ENCODE measurements at regions of chr1 and their contacts with region 1.

Region 1: DNA sequence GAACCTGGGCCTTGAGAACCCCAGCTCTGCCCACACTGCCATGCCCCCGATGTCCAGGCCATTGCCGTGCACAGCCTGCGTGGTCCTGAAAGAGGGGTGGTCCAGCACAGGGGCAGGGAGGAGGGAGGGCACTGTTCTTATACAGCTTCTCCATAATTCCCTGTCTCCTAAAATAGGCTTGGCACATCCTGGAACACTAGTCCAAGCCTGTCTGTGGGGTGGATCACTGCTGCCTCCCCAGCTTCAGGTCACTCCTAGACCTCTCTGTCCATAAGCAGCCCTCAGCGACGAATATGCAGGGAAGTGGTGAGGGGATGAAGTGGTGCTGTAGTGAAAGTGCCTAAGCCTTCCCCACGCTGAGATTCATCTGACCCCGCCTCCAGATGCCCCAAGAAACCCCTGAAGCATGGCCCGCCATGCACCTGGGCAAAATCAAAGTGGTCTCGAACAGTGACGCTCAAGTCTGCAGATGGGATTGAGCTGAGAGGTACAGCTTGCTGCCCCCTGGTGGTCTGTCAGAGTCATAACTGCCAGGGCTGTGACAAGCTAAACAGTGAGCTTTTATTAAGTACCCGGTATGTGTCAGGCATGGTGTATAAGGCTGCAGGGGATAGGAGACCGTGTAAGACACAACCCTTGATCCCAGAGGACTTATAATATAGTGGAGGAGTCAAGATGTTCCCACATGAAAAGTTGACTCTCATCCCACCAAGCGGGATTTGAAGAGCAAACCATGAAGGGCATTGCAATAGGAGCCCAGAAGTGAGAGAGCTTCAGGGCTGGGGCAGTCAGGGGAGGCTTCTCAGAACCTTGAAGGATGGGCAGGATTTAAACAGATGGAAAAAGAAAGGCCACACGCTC is 66.6 kb downstream of the FAM163A start:
- DNase-seq: peak; percentile 53 to 82 (median 78)
- ATAC-seq: peak; percentile 87
- H3K4me3 ChIP-seq: no peak overlapping the region
- H3K4me3 Mint-ChIP-seq: peak overlapping the region in 5 of 10 donors; percentile 20 to 46 (median 32)
- H3K27ac ChIP-seq: no peak overlapping the region
- H3K27ac Mint-ChIP-seq: peak overlapping the region in 6 of 9 donors; percentile 2 to 82 (median 26)
- H3K4me1 ChIP-seq: peaks cover 6 to 13% of the 10 kb centered on the region in 2 donors
- H3K4me1 Mint-ChIP-seq: peaks cover 1 to 13% (median 12%) of the 10 kb centered on the region in 7 donors
- H3K27me3 ChIP-seq: no peaks in the 10 kb centered on the region
- H3K27me3 Mint-ChIP-seq: peaks cover 0 to 6% (median 0%) of the 10 kb centered on the region in 5 donors

Region 2: DNA sequence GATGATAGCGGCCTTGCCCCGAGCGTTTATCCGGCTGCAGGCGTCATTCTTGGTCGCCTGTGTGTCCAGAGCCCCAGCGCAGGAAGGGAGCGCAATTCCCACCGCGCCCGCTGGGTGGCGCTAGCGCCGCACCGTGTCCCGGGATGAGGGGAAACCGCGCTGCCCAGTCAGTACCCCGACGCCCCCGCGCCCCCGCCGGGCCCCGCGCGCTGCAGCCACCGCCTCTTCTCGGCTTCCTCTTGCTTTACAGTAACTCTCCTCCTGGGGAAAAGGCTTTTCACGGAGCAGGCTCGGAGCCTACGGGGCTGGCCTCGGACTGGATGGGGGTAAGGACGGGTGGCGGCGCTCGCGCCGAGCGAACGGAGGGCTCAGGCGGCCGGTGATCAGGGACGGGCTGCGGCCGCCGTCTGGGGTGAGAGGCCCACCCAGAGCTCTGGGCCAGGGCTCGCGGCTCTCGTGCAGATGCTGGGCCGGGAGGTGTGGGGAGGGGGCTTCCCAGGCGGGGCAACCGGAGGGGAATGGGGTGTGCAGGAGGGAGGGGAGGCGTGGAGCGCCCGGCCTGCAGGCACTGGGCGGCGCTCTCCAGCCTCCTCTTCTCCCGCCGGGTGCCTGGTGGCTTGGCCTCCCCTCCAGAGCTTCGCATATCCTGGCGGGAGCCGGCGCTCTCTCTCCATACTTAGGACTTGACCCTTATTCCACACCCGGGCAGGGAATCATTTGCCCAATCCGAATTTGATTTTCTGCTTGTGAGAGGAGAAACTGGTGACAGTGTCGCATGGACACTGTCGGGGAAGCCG is 1267.0 kb before region 1 on chr1:
- CTCF ChIA-PET with region 1: no interaction called
- POLR2A ChIA-PET with region 1: no interaction called
- intact Hi-C with region 1: loop called in 1 of 2 experiments (anchors 10 kb)
- DNase-seq: peak; percentile 61 to 98 (median 87)
- ATAC-seq: peak; percentile 96
- H3K4me3 ChIP-seq: peak overlapping the region; percentile 99
- H3K4me3 Mint-ChIP-seq: peak overlapping the region; percentile 89 to 96 (median 92)
- H3K27ac ChIP-seq: peak overlapping the region; percentile 56
- H3K27ac Mint-ChIP-seq: peak overlapping the region; percentile 32 to 88 (median 83)
- H3K4me1 ChIP-seq: peaks cover 0 to 5% of the 10 kb centered on the region in 2 donors
- H3K4me1 Mint-ChIP-seq: peaks cover 0 to 15% (median 10%) of the 10 kb centered on the region in 7 donors
- H3K27me3 ChIP-seq: no peaks in the 10 kb centered on the region
- H3K27me3 Mint-ChIP-seq: no peaks in the 10 kb centered on the region

Region 3: GRCh38 chr1:179393721-179394120 is 416.0 kb before region 1 on chr1:
- CTCF ChIA-PET with region 1: no interaction called
- POLR2A ChIA-PET with region 1: no interaction called
- intact Hi-C with region 1: no loop called
- DNase-seq: no peak
- ATAC-seq: no peak
- H3K4me3 ChIP-seq: no peak overlapping the region
- H3K4me3 Mint-ChIP-seq: no peak overlapping the region
- H3K27ac ChIP-seq: no peak overlapping the region
- H3K27ac Mint-ChIP-seq: no peak overlapping the region
- H3K4me1 ChIP-seq: no peaks in the 10 kb centered on the region
- H3K4me1 Mint-ChIP-seq: no peaks in the 10 kb centered on the region
- H3K27me3 ChIP-seq: no peaks in the 10 kb centered on the region
- H3K27me3 Mint-ChIP-seq: peaks cover 0 to 20% (median 13%) of the 10 kb centered on the region in 5 donors

Region 4: DNA sequence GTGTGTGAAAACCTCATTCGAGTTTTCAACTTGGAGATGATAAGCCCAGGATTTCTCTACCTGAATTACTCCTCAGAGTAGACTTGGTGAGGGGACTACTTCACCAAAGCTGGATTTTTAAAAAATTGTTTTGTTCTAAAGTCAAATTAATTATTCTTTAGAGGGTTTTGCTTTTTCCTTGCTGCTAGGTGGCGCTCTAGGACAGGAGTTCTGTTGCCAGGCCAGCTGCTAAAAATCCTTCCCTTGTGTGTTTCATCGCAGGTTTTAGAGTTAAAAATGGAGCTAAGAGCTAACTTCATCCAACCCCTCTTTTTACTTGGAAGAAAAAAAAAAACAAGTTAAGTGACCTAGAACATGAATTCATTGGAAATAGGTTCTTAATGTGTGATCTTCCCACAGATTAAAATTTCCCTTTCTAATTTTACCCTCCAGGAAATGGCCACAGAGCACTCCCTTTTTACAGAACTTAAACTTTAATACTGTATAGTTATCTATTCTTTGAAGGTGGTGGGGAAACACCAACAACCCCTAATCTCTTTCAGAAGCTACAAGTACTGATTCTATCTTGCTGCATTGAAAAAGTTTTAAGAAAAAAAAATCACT is 103.3 kb before region 1 on chr1:
- CTCF ChIA-PET with region 1: interaction called, 376 read pairs
- POLR2A ChIA-PET with region 1: interaction called, 14 read pairs
- intact Hi-C with region 1: loop called (anchors 1 kb)
- DNase-seq: peak; percentile 27 to 78 (median 68)
- ATAC-seq: peak; percentile 33
- H3K4me3 ChIP-seq: no peak overlapping the region
- H3K4me3 Mint-ChIP-seq: no peak overlapping the region
- H3K27ac ChIP-seq: no peak overlapping the region
- H3K27ac Mint-ChIP-seq: peak overlapping the region in 6 of 9 donors; percentile 13 to 87 (median 72)
- H3K4me1 ChIP-seq: peaks cover 0 to 15% of the 10 kb centered on the region in 2 donors
- H3K4me1 Mint-ChIP-seq: peaks cover 6 to 25% (median 14%) of the 10 kb centered on the region in 7 donors
- H3K27me3 ChIP-seq: no peaks in the 10 kb centered on the region
- H3K27me3 Mint-ChIP-seq: peaks cover 0 to 6% (median 0%) of the 10 kb centered on the region in 5 donors

Region 5: GRCh38 chr1:179831852-179832699 is 22.3 kb after region 1 on chr1:
- CTCF ChIA-PET with region 1: interaction called, 33 read pairs
- POLR2A ChIA-PET with region 1: interaction called, 66 read pairs
- intact Hi-C with region 1: loop called in 1 of 2 experiments (anchors 1 kb)
- DNase-seq: peak in 7 of 9 donors; percentile 63 to 80 (median 76)
- ATAC-seq: peak; percentile 84
- H3K4me3 ChIP-seq: peak overlapping the region; percentile 56
- H3K4me3 Mint-ChIP-seq: peak overlapping the region; percentile 63 to 81 (median 72)
- H3K27ac ChIP-seq: peak overlapping the region; percentile 59
- H3K27ac Mint-ChIP-seq: peak overlapping the region; percentile 52 to 95 (median 91)
- H3K4me1 ChIP-seq: peaks cover 16 to 37% of the 10 kb centered on the region in 2 donors
- H3K4me1 Mint-ChIP-seq: peaks cover 23 to 47% (median 38%) of the 10 kb centered on the region in 7 donors
- H3K27me3 ChIP-seq: no peaks in the 10 kb centered on the region
- H3K27me3 Mint-ChIP-seq: no peaks in the 10 kb centered on the region

Region 6: GRCh38 chr1:180178511-180179161 is 368.9 kb after region 1 on chr1:
- CTCF ChIA-PET with region 1: interaction called, 10 read pairs
- POLR2A ChIA-PET with region 1: no interaction called
- intact Hi-C with region 1: loop called (anchors 1 to 5 kb)
- DNase-seq: peak; percentile 35 to 68 (median 55)
- ATAC-seq: peak; percentile 73
- H3K4me3 ChIP-seq: no peak overlapping the region
- H3K4me3 Mint-ChIP-seq: no peak overlapping the region
- H3K27ac ChIP-seq: no peak overlapping the region
- H3K27ac Mint-ChIP-seq: peak overlapping the region in 2 of 9 donors; percentile 9 to 55
- H3K4me1 ChIP-seq: no peaks in the 10 kb centered on the region
- H3K4me1 Mint-ChIP-seq: peaks cover 0 to 4% (median 0%) of the 10 kb centered on the region in 7 donors
- H3K27me3 ChIP-seq: no peaks in the 10 kb centered on the region
- H3K27me3 Mint-ChIP-seq: no peaks in the 10 kb centered on the region

Region 7: GRCh38 chr1:180563026-180563827 is 753.5 kb after region 1 on chr1:
- CTCF ChIA-PET with region 1: no interaction called
- POLR2A ChIA-PET with region 1: no interaction called
- intact Hi-C with region 1: no loop called
- DNase-seq: no peak
- ATAC-seq: no peak
- H3K4me3 ChIP-seq: no peak overlapping the region
- H3K4me3 Mint-ChIP-seq: no peak overlapping the region
- H3K27ac ChIP-seq: no peak overlapping the region
- H3K27ac Mint-ChIP-seq: no peak overlapping the region
- H3K4me1 ChIP-seq: no peaks in the 10 kb centered on the region
- H3K4me1 Mint-ChIP-seq: peaks cover 0 to 2% (median 0%) of the 10 kb centered on the region in 7 donors
- H3K27me3 ChIP-seq: no peaks in the 10 kb centered on the region
- H3K27me3 Mint-ChIP-seq: peaks cover 7 to 27% (median 13%) of the 10 kb centered on the region in 5 donors